ENCODE measurements at regions of chr6 and their contacts with region 1.

Region 1: DNA sequence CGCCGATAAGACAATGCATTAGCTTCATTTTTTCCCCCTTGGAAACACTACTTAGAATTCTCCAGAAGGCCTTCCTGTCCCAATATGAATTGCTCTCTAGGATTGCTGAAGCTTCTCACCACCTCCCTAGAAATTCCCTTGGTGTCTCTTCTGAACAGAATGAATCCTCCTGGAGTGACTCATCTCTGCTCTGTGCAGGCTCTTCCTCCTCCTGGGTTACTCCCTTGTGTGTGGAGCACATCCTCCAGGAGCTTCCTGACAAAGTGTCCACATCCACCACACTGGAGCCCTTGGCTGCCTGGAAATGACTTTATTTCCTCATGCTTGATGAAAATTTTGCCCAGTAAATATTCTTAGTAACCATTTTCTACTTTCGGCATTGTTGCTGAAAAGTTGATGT is 54.4 kb downstream of the DTNBP1 start:
- DNase-seq: no peak

Region 2: DNA sequence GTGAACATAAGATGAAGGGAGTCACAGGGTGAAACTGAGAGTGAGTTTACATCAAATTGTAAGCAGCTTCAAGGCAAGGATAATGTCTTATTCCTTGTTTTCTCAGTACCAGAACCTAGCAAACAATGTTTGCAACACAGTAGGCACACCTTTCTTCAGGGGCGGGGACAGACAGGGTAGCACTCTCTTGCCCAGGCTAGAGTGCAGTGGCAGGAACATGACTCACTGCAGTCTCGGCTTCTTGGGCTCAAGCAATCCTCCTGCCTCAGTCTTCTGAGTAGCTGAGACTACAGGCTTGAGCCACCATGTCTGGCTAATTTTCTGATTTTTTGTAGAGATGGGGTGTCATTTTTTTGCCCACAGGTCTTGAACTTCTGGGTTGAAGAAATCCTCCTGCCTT is 1191.0 kb before region 1 on chr6:
- intact Hi-C with region 1: no loop called
- DNase-seq: no peak

Region 3: GRCh38 chr6:15504581-15505350 is 103.6 kb before region 1 on chr6:
- intact Hi-C with region 1: loop called in 1 of 2 experiments (anchors 10 kb)
- DNase-seq: peak; percentile 84

Region 4: GRCh38 chr6:15588971-15589634 is 19.3 kb before region 1 on chr6:
- intact Hi-C with region 1: no loop called
- DNase-seq: no peak

Region 5: GRCh38 chr6:16982807-16983206 is 1374.4 kb after region 1 on chr6:
- intact Hi-C with region 1: no loop called
- DNase-seq: no peak

Measured in posterior vena cava (tissue), 2 donors.